Endothelial cell of umbilical vein (primary cell): ENCODE measurements at regions of chr19 and their contacts with region 1.

Region 1: DNA sequence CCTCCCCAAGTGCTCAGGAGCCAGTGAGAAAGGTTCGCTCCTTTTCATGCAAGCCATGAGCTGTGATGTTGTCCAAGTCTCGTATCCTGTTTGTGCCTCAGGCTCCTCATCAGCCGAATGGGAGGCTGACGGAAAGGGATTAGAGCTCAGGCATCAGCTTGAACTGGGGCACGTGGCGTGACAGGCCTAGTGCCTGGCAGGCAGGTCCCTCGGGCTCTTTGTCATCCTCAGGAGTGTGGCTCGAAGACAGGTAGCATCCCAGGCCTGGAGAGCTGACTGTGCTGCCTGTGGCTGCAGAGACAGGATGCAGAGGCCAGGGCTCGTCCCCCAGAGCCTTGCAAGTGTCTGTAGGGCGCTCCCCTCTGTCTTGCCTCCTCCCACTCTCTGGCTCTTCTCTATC is 38.5 kb downstream of the DNM2 start:
- DNase-seq: no peak
- H3K4me3 ChIP-seq: no peak overlapping the region
- H3K27ac ChIP-seq: no peak overlapping the region
- H3K4me1 ChIP-seq: peaks cover 8% of the 10 kb centered on the region
- H3K27me3 ChIP-seq: no peaks in the 10 kb centered on the region
- CTCF ChIP-seq: no peak
- POLR2A ChIP-seq: no peak

Region 2: DNA sequence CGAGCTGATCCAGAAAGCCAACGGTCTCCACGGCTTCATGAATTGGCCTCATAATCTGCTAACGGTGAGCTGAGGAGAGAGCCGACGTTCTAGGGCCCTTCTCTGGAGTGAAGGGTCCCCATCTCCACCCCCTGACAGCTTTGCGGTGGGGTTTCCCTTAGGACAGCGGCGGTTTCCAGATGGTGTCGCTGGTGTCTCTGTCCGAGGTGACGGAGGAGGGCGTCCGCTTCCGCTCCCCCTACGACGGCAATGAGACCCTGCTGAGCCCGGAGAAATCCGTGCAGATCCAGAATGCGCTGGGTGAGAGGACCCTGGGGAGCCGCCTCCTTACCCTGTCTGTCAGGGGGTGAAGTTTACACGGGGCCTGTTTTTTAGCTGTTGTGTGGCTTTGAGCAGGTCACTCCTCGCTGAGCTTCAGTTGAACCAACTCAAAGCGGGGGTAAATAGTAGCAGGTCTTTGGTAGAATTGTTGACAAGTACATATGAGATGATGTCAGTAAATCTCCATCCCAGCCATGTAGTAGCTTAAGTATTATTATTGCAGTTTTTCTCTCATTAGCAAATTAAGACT is 54.3 kb before region 1 on chr19:
- CTCF ChIA-PET with region 1: no interaction called
- POLR2A ChIA-PET with region 1: interaction called, 12 read pairs
- dilution Hi-C with region 1: no loop called
- intact Hi-C with region 1: no loop called
- DNase-seq: peak; percentile 13
- H3K4me3 ChIP-seq: peak overlapping the region; percentile 36 to 99 (median 68)
- H3K27ac ChIP-seq: peak overlapping the region; percentile 0
- H3K4me1 ChIP-seq: peaks cover 10% of the 10 kb centered on the region
- H3K27me3 ChIP-seq: no peaks in the 10 kb centered on the region
- CTCF ChIP-seq: no peak
- POLR2A ChIP-seq: no peak